Activated naive CD4-positive, alpha-beta T cell treated with anti-CD3 and anti-CD28 coated beads, Interleukin-2, amount 10 ng/mL, durations not matched to agents 7 days and 5 days (primary cell): ENCODE measurements at regions of chr13 and their contacts with region 1.

Region 1: DNA sequence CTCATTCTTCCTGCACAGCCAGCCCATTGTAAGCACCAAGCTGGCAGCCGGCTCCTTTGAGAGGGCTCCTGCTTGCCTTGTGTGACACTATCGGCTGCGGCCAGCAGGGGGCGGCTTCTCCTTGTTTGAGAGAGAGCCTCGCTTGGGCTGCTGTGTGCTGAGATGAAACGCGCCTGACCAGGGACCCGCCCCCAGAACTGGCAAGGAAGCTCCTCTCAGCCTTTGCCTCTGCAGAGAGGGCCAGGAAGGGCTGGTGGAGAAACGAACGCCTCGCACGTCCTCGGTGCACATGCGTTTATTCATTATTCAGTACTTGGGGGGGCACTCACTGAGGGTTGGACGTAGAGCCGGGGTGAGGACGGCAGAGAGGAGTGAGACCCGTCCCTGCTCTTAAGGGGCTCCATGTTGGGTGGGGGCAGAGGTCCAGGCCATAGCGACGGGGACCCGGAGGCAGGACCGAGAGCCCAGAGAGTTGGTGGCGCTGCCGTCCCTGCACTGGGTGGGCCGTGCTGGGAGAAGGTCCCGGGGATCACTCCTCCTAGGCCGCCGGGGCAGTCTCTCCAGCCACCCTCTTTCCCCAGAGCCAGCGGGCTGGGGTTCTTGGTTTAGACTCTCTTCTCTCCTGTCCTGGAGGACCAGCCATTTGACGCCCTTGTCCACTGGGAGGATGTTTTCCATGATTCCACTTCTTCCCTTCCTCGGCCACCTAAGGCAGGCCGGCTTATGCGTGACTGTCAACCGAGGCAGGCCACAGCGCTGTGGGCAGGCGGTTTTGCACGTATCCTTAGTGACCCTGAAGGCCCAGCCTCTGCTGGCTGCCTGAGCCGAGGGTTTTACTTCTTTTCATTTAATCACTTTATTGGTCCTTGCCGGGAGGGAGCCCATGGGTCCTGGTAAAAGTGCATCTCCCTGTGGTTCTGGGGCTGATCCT is 174.5 kb downstream of the KATNAL1 start:
- DNase-seq: peak; percentile 99
- H3K4me3 Mint-ChIP-seq: no peak overlapping the region
- H3K27ac Mint-ChIP-seq: peak overlapping the region; percentile 76
- H3K4me1 Mint-ChIP-seq: peaks cover 13% of the 10 kb centered on the region
- H3K27me3 Mint-ChIP-seq: peaks cover 18% of the 10 kb centered on the region

Region 2: DNA sequence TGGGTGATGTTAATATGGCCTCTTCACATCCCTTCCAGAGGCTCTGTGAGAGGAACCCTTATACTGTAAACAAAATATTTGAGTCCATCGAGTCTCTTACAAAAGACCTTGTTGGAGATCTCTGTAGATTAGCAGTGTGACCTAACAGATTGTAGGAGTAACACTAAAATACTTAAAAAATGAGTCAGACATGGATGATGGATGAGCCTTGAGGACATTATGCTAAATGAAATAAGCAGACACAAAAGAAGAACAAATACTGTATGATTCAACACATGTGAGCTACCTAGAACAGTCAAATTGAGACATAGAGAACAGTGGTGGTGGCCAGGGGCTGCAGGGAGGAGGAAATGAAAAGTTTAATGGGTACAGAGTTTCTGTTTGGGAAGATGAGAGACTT is 130.3 kb before region 1 on chr13:
- CTCF ChIA-PET with region 1: no interaction called
- DNase-seq: no peak
- H3K4me3 Mint-ChIP-seq: no peak overlapping the region
- H3K27ac Mint-ChIP-seq: no peak overlapping the region
- H3K4me1 Mint-ChIP-seq: peaks cover 31% of the 10 kb centered on the region
- H3K27me3 Mint-ChIP-seq: peaks cover 6% of the 10 kb centered on the region

Region 3: DNA sequence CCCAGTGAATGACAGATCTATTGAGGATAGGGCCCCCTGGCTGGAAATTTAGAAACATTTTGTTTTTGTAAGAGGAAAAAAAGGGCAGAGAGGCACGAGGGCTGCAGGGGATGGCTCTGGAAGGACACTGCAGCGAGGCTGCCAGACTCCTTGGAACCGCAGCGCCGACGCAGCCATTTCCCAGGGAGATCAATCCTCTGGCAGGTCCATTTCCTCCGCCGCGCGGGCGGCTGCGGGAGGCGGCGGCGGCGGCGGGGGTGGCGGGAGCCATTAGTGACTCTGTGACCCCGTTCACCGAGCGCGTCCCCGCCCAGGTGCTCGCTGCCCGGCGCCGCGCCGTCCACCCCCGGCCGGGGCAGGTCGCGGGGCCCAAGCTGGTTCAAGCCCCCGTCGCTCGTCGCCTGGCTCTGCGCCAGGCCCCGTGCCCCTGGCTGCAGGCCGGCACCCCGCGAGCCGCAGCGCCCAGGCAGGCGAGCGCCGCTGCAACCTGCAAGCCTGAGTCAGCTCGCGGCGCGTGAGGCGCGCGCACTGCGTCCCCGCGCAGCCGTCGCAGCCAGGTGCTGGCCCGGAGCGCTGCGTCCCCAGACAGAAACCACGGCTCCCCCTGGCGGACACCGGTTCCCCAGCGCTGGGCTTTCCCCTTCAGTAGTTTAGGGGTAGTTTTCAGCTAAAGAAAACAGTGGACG is 18.2 kb before region 1 on chr13:
- CTCF ChIA-PET with region 1: interaction called, 50 read pairs
- DNase-seq: peak; percentile 95
- H3K4me3 Mint-ChIP-seq: peak overlapping the region; percentile 75
- H3K27ac Mint-ChIP-seq: peak overlapping the region; percentile 19
- H3K4me1 Mint-ChIP-seq: peaks cover 38% of the 10 kb centered on the region
- H3K27me3 Mint-ChIP-seq: peaks cover 26% of the 10 kb centered on the region

Region 4: GRCh38 chr13:30165796-30166195 is 32.9 kb after region 1 on chr13:
- CTCF ChIA-PET with region 1: interaction called, 11 read pairs
- DNase-seq: no peak
- H3K4me3 Mint-ChIP-seq: no peak overlapping the region
- H3K27ac Mint-ChIP-seq: no peak overlapping the region
- H3K4me1 Mint-ChIP-seq: peaks cover 16% of the 10 kb centered on the region
- H3K27me3 Mint-ChIP-seq: peaks cover 19% of the 10 kb centered on the region

Region 5: GRCh38 chr13:30341815-30342570 is 209.1 kb after region 1 on chr13:
- CTCF ChIA-PET with region 1: interaction called, 48 read pairs
- DNase-seq: no peak
- H3K4me3 Mint-ChIP-seq: no peak overlapping the region
- H3K27ac Mint-ChIP-seq: no peak overlapping the region
- H3K4me1 Mint-ChIP-seq: peaks cover 22% of the 10 kb centered on the region
- H3K27me3 Mint-ChIP-seq: peaks cover 21% of the 10 kb centered on the region

Region 6: GRCh38 chr13:30465585-30466357 is 332.9 kb after region 1 on chr13 and contains the start of gene HMGB1:
- CTCF ChIA-PET with region 1: interaction called, 12 read pairs
- DNase-seq: peak; percentile 99
- H3K4me3 Mint-ChIP-seq: peak within 1 kb of the TSS; percentile 88
- H3K27ac Mint-ChIP-seq: peak within 1 kb of the TSS; percentile 99
- H3K4me1 Mint-ChIP-seq: peaks cover 30% of the 10 kb centered on the region
- H3K27me3 Mint-ChIP-seq: peaks cover 5% of the 10 kb centered on the region

Region 7: GRCh38 chr13:30577401-30577852 is 444.5 kb after region 1 on chr13:
- CTCF ChIA-PET with region 1: interaction called, 29 read pairs
- DNase-seq: peak; percentile 34
- H3K4me3 Mint-ChIP-seq: no peak overlapping the region
- H3K27ac Mint-ChIP-seq: no peak overlapping the region
- H3K4me1 Mint-ChIP-seq: peaks cover 32% of the 10 kb centered on the region
- H3K27me3 Mint-ChIP-seq: peaks cover 23% of the 10 kb centered on the region

Region 8: GRCh38 chr13:30972832-30973377 is 840.0 kb after region 1 on chr13:
- CTCF ChIA-PET with region 1: no interaction called
- DNase-seq: no peak
- H3K4me3 Mint-ChIP-seq: no peak overlapping the region
- H3K27ac Mint-ChIP-seq: no peak overlapping the region
- H3K4me1 Mint-ChIP-seq: no peaks in the 10 kb centered on the region
- H3K27me3 Mint-ChIP-seq: peaks cover 55% of the 10 kb centered on the region